Endothelial cell of umbilical vein (primary cell): ENCODE measurements at regions of chr11 and their contacts with region 1.

Region 1: DNA sequence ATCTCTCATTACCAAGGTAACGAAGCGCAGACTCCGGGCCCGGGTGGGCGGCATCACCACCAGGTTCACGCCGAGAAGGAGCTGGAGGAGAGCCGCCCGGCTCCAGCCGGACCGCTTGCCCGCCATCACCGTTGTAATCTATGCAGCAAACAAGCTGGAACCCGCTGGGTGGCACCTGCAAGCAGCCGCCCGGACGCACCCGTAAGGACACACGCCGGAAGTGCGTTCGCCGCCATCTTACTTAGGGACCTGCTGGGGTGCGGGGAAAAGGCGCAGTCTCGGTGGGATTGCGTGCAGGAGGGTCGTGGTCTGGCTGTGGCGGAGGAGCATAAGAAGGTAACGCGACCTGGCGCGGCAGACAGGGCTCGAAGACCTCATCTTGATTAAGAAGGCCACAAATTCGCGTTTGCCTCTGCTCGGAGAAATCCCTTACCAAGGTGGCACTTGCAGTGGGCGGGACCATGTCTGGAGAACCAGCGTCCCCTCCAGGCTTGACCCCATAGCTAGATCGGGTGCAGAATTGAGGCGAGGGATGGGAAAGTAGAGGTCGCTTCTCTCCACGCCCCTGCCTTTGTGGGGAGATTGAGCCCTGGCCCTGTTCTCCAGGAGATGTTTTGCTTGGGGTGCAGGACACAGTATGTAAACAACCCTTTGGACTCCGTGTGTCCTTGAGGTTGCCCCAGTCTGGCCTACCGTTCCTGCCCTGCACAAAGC is at the start of gene ACP2:
- DNase-seq: peak; percentile 88
- H3K4me3 ChIP-seq: peak within 1 kb of the TSS; percentile 50 to 74 (median 68)
- H3K27ac ChIP-seq: peak within 1 kb of the TSS; percentile 49
- H3K4me1 ChIP-seq: peaks cover 13% of the 10 kb centered on the region
- H3K27me3 ChIP-seq: no peaks in the 10 kb centered on the region
- CTCF ChIP-seq: peak; percentile 7 to 34
- POLR2A ChIP-seq: peak; percentile 92
- total RNA-seq, gene ACP2: 35.6 and 39.7 TPM in 2 replicates

Region 2: GRCh38 chr11:47233989-47234668 is 14.7 kb before region 1 on chr11:
- CTCF ChIA-PET with region 1: interaction called, 13 read pairs
- POLR2A ChIA-PET with region 1: interaction called, 3 read pairs
- dilution Hi-C with region 1: no loop called
- intact Hi-C with region 1: no loop called
- DNase-seq: peak; percentile 29
- H3K4me3 ChIP-seq: no peak overlapping the region
- H3K27ac ChIP-seq: no peak overlapping the region
- H3K4me1 ChIP-seq: peaks cover 15% of the 10 kb centered on the region
- H3K27me3 ChIP-seq: no peaks in the 10 kb centered on the region
- CTCF ChIP-seq: peak in 1 of 2 donors; percentile 27
- POLR2A ChIP-seq: no peak

Region 3: GRCh38 chr11:47775240-47775869 is 526.5 kb after region 1 on chr11:
- CTCF ChIA-PET with region 1: no interaction called
- POLR2A ChIA-PET with region 1: no interaction called
- dilution Hi-C with region 1: no loop called
- intact Hi-C with region 1: no loop called
- DNase-seq: no peak
- H3K4me3 ChIP-seq: no peak overlapping the region
- H3K27ac ChIP-seq: no peak overlapping the region
- H3K4me1 ChIP-seq: no peaks in the 10 kb centered on the region
- H3K27me3 ChIP-seq: no peaks in the 10 kb centered on the region
- CTCF ChIP-seq: no peak
- POLR2A ChIP-seq: no peak